GM10248 (cell line): ENCODE measurements at regions of chr14 and their contacts with region 1.

Region 1: GRCh38 chr14:91363776-91364523 is 53.7 kb downstream of the CCDC88C start:
- DNase-seq: peak; percentile 77
- CTCF ChIP-seq: peak; percentile 12

Region 2: DNA sequence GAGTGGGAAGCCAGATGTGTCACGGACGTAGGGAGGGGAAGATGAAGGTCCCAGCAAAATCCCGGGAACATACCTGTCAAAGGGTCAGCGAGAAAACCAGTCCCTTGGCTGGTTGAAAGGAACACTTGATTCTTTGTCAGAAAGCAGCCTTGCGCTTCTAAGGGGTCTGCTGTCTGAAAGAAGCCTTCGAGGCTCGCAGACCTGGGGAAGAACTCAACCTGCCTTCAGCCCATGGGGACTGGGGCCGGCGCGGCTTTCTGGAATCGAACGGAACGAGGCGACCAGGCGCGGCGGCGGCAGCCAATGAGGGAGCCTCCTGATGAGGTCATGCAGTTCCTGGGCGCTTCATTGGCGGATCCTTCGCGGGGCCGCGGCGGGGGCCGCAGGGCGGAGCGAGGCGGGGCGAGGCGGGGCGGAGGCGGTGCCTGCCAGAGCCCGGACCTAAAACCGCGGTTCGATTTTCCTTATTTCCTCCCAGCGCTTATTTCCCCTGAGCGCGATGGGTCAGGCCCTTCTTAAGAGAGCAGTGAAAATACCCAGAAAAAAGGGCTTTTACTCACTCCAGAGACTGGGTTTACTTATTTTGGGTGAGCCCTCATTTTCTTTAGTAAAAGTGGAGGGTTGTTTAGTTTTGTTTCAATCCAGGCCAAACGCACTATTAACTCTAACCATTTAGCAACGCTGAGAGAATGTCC is 535.9 kb before region 1 on chr14:
- CTCF ChIA-PET with region 1: no interaction called
- POLR2A ChIA-PET with region 1: no interaction called
- DNase-seq: peak; percentile 94
- CTCF ChIP-seq: no peak

Region 3: GRCh38 chr14:91339671-91340369 is 24.1 kb before region 1 on chr14:
- CTCF ChIA-PET with region 1: no interaction called
- POLR2A ChIA-PET with region 1: no interaction called
- DNase-seq: no peak
- CTCF ChIP-seq: no peak

Region 4: GRCh38 chr14:91350813-91351511 is 13.0 kb before region 1 on chr14:
- CTCF ChIA-PET with region 1: interaction called, 20 read pairs
- POLR2A ChIA-PET with region 1: no interaction called
- DNase-seq: peak; percentile 75
- CTCF ChIP-seq: no peak